Testis (tissue), 5 donors: ENCODE measurements at regions of chr1 and their contacts with region 1.

Region 1: DNA sequence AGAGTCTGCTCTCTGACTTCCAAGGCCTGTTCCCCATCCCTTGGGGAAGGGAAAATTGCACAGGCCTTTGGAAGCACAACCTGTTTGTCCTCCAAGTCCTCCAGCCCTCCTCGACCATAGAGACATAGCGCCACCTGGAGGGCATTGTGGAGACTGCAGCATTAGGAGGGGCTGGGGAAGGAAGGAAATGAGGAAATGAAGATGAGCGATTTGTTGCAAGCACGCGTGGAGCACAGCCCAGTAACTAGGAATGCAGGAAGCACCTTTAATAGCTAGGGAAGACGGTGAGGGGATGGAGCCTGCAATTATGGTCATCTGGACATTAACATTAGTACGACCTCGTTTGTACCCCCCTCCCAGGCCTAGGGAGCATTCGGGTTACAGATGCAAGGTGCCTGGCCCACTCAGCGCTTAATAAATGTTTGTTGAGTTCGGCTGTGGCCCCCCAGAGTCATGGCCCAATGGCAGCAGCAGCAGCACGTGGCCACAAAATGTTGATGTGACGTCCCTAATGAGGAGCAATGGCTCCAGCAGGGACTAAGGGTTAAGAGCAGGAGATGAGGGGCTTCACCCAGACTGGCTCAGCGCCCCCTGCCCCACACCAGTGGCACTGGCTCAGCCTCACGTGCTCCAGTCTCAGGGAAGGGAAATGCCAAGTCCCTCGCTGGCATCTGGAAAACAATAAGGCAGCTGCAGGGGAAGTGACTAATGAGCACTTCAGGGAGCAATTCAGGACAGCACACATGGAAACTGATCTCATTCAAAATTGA is 8.0 kb upstream of the CAMK2N1 start:
- DNase-seq: peak; percentile 91
- H3K4me3 ChIP-seq: no peak overlapping the region
- H3K27ac ChIP-seq: no peak overlapping the region
- H3K4me1 ChIP-seq: peaks cover 11% of the 10 kb centered on the region
- H3K27me3 ChIP-seq: no peaks in the 10 kb centered on the region
- CTCF ChIP-seq: peak; percentile 96 to 99 (median 98)
- POLR2A ChIP-seq: no peak

Region 2: DNA sequence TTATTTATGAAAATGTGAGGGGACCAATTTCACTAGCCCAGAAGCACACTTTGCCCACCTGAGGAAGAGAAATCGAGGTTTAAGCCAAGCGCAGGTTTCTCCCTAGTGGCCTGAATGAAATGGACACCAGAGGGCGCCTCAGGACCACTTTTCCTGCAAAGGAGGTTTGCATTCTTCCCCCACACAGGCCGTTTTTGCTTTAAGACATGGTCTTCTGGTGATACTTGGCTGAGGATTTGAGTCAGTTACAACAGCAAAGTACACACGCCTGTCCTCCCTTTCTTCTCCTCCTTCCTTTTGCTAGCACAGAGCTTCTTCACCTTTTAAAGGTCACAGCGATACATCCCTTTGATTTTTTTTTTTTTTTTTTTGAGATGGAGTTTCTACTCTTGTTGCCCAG is 576.0 kb before region 1 on chr1:
- intact Hi-C with region 1: loop called (anchors 10 kb)
- DNase-seq: peak; percentile 93
- H3K4me3 ChIP-seq: no peak overlapping the region
- H3K27ac ChIP-seq: no peak overlapping the region
- H3K4me1 ChIP-seq: peaks cover 24% of the 10 kb centered on the region
- H3K27me3 ChIP-seq: no peaks in the 10 kb centered on the region
- CTCF ChIP-seq: peak; percentile 86 to 88 (median 88)
- POLR2A ChIP-seq: no peak

Region 3: GRCh38 chr1:20207419-20207959 is 286.5 kb before region 1 on chr1:
- intact Hi-C with region 1: loop called (anchors 10 kb)
- DNase-seq: no peak
- H3K4me3 ChIP-seq: no peak overlapping the region
- H3K27ac ChIP-seq: no peak overlapping the region
- H3K4me1 ChIP-seq: peaks cover 21% of the 10 kb centered on the region
- H3K27me3 ChIP-seq: no peaks in the 10 kb centered on the region
- CTCF ChIP-seq: no peak
- POLR2A ChIP-seq: no peak

Region 4: GRCh38 chr1:20348326-20348915 is 145.6 kb before region 1 on chr1:
- intact Hi-C with region 1: no loop called
- DNase-seq: no peak
- H3K4me3 ChIP-seq: no peak overlapping the region
- H3K27ac ChIP-seq: no peak overlapping the region
- H3K4me1 ChIP-seq: no peaks in the 10 kb centered on the region
- H3K27me3 ChIP-seq: no peaks in the 10 kb centered on the region
- CTCF ChIP-seq: no peak
- POLR2A ChIP-seq: no peak

Region 5: DNA sequence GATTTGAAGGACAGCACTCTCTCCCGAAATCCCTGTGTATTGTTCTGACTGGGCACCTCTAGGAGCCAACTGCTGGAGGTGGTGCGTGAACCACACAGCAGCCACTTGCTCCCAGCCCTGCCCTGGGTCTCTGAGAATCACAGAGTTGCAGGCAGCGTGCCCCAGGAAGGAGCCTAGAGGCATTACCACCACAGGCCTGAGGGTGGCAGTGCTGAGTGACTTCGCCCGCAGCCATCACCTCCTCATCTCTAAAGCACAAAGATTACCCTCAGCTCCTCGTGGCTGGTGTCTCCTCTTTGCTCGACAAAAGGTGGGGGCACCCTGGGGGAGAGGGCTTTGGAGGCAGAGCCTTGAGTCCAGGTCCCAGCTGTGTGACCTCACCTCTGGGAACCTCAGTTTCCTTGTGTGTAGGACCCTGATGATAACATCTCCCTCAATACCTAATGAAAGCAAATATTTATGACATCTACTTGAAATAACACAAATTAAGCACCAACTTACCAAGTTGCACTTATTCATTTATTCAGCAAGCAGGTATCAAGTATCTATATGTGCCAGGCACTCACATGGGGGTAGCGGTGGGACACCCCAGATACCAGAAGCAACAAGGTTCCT is 117.0 kb before region 1 on chr1:
- intact Hi-C with region 1: loop called (anchors 10 kb)
- DNase-seq: peak; percentile 63
- H3K4me3 ChIP-seq: no peak overlapping the region
- H3K27ac ChIP-seq: no peak overlapping the region
- H3K4me1 ChIP-seq: no peaks in the 10 kb centered on the region
- H3K27me3 ChIP-seq: no peaks in the 10 kb centered on the region
- CTCF ChIP-seq: peak in 2 of 3 experiments; percentile 68 to 83
- POLR2A ChIP-seq: no peak